Activated B cell treated with CpG ODN at 0.5 μM for 24 hours (primary cell): ENCODE measurements at regions of chr17 and their contacts with region 1.

Region 1: DNA sequence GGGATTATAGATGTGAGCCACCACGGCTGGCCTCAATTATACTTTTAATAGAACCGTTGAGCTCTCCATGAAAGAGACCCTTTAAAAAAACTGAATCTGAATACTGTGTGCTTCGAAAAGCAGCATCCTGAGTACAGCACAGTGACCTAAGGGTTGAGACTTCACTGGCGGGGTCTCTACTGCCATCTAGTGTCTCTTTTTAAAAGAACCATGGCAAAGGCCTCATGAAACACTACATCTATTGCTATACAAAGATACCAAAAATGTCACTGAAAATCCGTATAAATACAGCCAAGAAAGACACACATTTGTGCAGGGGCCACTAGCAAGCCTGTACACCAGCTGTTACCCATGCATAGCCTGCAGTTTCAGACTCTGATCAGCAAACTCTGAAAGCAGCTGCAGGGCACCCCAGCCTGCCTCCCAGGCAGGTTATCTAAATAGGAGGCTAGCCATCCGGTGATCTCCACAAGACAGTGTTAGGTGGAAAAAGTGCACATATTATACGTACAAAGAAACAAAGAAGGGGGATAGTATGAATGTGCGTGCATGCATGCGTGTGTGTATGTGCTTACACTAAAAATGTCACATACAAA is 35.3 kb downstream of the NPLOC4 start:
- DNase-seq: no peak
- ATAC-seq: peak; percentile 63
- H3K4me3 Mint-ChIP-seq: no peak overlapping the region
- H3K27ac Mint-ChIP-seq: peak overlapping the region; percentile 57
- H3K4me1 Mint-ChIP-seq: peaks cover 46% of the 10 kb centered on the region
- H3K27me3 Mint-ChIP-seq: no peaks in the 10 kb centered on the region
- CTCF ChIP-seq: peak; percentile 19

Region 2: GRCh38 chr17:81142301-81143199 is 459.1 kb before region 1 on chr17:
- CTCF ChIA-PET with region 1: interaction called, 4 read pairs
- POLR2A ChIA-PET with region 1: no interaction called
- intact Hi-C with region 1: loop called (anchors 1 kb)
- DNase-seq: peak; percentile 58
- ATAC-seq: peak; percentile 92
- H3K4me3 Mint-ChIP-seq: no peak overlapping the region
- H3K27ac Mint-ChIP-seq: no peak overlapping the region
- H3K4me1 Mint-ChIP-seq: no peaks in the 10 kb centered on the region
- H3K27me3 Mint-ChIP-seq: peaks cover 3% of the 10 kb centered on the region
- CTCF ChIP-seq: no peak

Region 3: DNA sequence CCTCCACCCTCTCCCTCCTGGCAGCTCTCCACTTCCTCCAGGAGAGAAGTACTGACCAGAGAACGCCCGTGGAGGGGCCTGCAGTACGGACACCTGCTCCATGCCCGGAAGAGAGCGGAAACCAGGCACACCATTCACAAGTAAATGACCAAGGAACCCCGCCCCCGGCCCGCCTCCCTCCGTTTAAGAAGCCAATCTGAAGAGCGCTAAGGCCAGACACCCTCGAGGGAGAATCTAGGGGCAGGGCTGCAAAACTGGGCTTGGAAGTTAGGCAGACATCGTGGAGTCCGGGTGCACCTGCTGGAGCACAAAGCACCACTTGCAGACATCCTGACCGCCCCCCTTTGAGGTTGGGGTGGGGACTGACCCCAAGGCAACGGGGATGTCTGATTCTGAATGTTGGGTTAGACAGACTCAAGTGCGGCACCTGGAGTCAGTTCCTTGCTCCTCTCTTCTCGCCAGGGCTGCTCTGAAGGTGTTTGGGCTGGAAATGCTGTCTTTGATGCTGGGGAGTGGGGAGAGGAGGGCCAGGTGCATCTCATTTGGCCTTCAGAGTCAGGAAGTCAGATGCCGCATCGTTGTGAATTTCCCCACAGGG is 48.5 kb before region 1 on chr17:
- CTCF ChIA-PET with region 1: no interaction called
- POLR2A ChIA-PET with region 1: interaction called, 10 read pairs
- intact Hi-C with region 1: loop called (anchors 1 kb)
- DNase-seq: no peak
- ATAC-seq: peak; percentile 71
- H3K4me3 Mint-ChIP-seq: peak overlapping the region; percentile 91
- H3K27ac Mint-ChIP-seq: peak overlapping the region; percentile 92
- H3K4me1 Mint-ChIP-seq: peaks cover 45% of the 10 kb centered on the region
- H3K27me3 Mint-ChIP-seq: no peaks in the 10 kb centered on the region
- CTCF ChIP-seq: no peak

Region 4: GRCh38 chr17:81860756-81861518 is 259.3 kb after region 1 on chr17:
- CTCF ChIA-PET with region 1: no interaction called
- POLR2A ChIA-PET with region 1: no interaction called
- intact Hi-C with region 1: no loop called
- DNase-seq: peak; percentile 100
- ATAC-seq: peak; percentile 90
- H3K4me3 Mint-ChIP-seq: peak overlapping the region; percentile 89
- H3K27ac Mint-ChIP-seq: peak overlapping the region; percentile 94
- H3K4me1 Mint-ChIP-seq: peaks cover 30% of the 10 kb centered on the region
- H3K27me3 Mint-ChIP-seq: no peaks in the 10 kb centered on the region
- CTCF ChIP-seq: no peak